ENCODE measurements at regions of chr20 and their contacts with region 1.

Region 1: GRCh38 chr20:44521484-44522481 is at the start of gene SERINC3:
- DNase-seq: peak; percentile 97 to 99
- ATAC-seq: peak; percentile 99
- H3K4me3 ChIP-seq: peak within 1 kb of the TSS; percentile 73 to 80
- H3K27ac ChIP-seq: peak within 1 kb of the TSS; percentile 58 to 89
- H3K4me1 ChIP-seq: peaks cover 0 to 3% of the 10 kb centered on the region in 2 donors
- H3K27me3 ChIP-seq: no peaks in the 10 kb centered on the region
- total RNA-seq, gene SERINC3: 131 to 134 TPM

Region 2: DNA sequence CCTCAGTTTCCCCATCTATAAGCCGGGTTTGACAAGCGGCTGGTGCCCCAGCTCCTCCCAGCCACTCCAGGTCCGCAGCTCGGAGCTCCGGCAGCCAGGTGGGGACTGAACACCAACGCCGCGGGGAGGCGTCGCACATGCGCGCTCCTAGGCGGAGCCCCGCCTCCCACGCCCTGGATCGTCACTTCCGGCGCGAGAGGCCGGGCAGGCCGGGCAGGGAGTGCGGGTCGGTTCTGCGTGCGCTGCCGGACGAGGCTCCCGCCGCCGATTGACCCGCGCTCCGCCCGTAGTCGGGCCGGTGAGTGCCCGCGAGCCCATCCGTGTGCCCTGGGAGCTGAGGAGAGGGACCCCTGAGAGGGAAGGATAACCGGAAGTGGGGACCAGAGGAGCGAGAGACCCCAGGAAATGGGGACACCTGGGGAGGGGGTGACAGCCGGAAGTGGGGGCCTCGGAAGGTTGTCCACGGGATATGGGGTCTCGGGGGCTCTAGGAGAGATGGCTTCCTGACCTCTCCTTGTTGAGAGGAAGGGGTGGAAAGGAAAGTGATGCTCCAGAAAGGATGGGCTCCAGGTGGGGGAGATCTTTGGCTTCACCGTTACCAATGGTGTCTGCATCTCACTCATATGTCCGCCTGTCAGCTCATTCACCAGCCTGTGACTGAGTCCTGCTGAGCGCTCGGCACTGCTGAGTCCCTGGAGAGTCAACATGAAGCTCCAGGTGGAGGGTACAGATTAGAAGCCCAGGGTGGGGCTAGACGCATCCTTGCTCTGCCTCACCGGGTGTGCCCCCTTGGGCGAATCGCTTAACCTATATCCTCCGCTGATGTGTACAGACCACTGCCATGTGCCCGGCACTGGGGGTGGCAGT is 45.9 kb before region 1 on chr20 and contains the start of gene TTPAL:
- intact Hi-C with region 1: loop called in 1 of 2 experiments (anchors 5 kb)
- DNase-seq: peak; percentile 89 to 96
- ATAC-seq: peak; percentile 97
- H3K4me3 ChIP-seq: peak within 1 kb of the TSS; percentile 50 to 55
- H3K27ac ChIP-seq: peak within 1 kb of the TSS; percentile 51 to 60
- H3K4me1 ChIP-seq: no peaks in the 10 kb centered on the region
- H3K27me3 ChIP-seq: no peaks in the 10 kb centered on the region
- total RNA-seq, gene TTPAL: 7.6 to 11.8 TPM

Region 3: GRCh38 chr20:44572541-44573500 is 51.0 kb after region 1 on chr20:
- intact Hi-C with region 1: loop called in 1 of 2 experiments (anchors 5 kb)
- DNase-seq: no peak
- ATAC-seq: peak; percentile 70
- H3K4me3 ChIP-seq: no peak overlapping the region
- H3K27ac ChIP-seq: peak overlapping the region; percentile 38 to 96
- H3K4me1 ChIP-seq: no peaks in the 10 kb centered on the region
- H3K27me3 ChIP-seq: no peaks in the 10 kb centered on the region

Region 4: GRCh38 chr20:44598423-44599305 is 76.9 kb after region 1 on chr20:
- intact Hi-C with region 1: loop called in 1 of 2 experiments (anchors 5 kb)
- DNase-seq: peak in 1 of 2 donors; percentile 74
- ATAC-seq: no peak
- H3K4me3 ChIP-seq: no peak overlapping the region
- H3K27ac ChIP-seq: peak overlapping the region; percentile 78 to 91
- H3K4me1 ChIP-seq: peaks cover 12 to 19% of the 10 kb centered on the region in 2 donors
- H3K27me3 ChIP-seq: no peaks in the 10 kb centered on the region

Region 5: GRCh38 chr20:44733341-44734069 is 211.7 kb after region 1 on chr20:
- intact Hi-C with region 1: loop called in 1 of 2 experiments (anchors 10 kb)
- DNase-seq: peak; percentile 77 to 87
- ATAC-seq: peak; percentile 78
- H3K4me3 ChIP-seq: no peak overlapping the region
- H3K27ac ChIP-seq: peak overlapping the region in 1 of 2 donors; percentile 91
- H3K4me1 ChIP-seq: peaks cover 0 to 4% of the 10 kb centered on the region in 2 donors
- H3K27me3 ChIP-seq: no peaks in the 10 kb centered on the region

Measured in aorta (tissue), 5 donors.